Right ventricle myocardium inferior (tissue), 1 donor: ENCODE measurements at regions of chr18 and their contacts with region 1.

Region 1: DNA sequence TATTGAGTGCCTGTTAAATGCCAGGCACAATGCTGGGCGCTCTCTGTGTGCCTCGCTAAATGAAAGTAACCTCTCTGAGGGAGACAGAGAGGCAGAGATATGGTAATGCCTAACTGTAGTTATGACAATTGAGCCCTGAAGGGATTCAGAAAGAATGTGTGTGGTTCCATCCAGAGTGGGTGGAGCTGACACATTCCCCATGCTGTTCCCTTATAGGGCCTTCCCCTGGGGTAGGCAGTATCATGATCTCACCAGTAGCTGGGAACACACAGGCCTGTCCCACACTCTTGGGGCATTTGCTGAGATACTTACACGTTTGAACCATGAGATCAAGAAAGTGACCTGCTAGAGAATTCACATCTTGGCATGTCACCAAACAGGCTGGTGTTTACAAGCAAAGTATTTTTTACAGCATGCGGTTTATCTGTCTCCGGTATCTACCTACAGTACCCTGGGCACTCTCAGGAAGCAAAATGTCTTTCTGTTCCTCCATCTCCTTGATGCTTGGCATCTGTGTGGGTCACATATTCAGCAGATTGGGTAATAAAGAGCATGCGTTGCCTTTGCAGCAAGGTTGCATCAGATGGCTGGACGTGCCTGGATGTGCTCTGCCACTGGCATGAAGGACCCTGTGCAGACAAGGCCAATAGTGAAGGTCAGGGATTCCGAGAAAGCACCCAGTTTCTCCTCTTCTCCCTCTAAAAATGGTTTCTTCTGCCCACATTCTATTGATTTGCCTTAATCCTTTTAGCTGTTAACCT is 9.4 kb downstream of the CTIF start:
- DNase-seq: no peak
- ATAC-seq: peak; percentile 76

Region 2: DNA sequence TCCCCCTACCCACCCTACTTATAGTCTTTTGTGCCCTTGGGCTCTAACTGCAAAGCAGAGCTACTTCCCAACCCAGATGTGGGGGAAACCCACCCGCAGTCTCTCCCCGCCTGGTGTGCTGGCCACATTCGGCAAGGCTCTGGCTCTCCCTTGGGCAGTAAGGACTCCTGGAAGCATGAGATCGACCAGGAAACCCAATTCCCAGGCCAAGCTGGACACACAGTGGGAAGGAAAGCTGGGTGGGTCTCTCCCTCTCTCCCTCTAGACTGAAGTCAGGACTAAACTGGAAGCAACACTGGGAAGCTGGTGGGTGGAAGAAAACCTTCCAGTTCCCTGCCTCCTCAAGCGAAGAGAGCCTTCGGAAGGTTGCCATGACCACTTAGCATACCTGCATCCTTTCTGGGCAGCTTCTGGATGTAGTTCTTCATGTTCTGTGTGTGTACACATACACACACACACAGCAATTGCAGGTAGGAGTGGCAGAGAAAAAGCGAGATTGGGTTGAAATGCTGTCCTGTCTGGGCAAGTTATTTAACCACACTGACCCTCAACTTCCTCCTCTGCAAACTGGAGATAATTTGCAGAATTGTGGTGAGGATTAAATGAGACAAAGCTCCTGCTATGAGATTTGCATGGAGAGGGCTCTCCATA is 172.9 kb before region 1 on chr18:
- intact Hi-C with region 1: no loop called
- DNase-seq: no peak
- ATAC-seq: peak; percentile 23

Region 3: GRCh38 chr18:48589797-48590519 is 41.8 kb after region 1 on chr18:
- intact Hi-C with region 1: loop called (anchors 2 kb)
- DNase-seq: no peak
- ATAC-seq: peak; percentile 73